AG04450 (cell line): ENCODE measurements at regions of chr3 and their contacts with region 1.

Region 1: GRCh38 chr3:138941259-138941885 is 5.6 kb downstream of the FOXL2 start:
- DNase-seq: peak; percentile 11
- H3K4me3 ChIP-seq: no peak overlapping the region
- H3K27ac ChIP-seq: no peak overlapping the region
- H3K27me3 ChIP-seq: peaks cover 93% of the 10 kb centered on the region
- CTCF ChIP-seq: peak; percentile 70

Region 2: GRCh38 chr3:138974462-138974861 is 33.1 kb after region 1 on chr3:
- CTCF ChIA-PET with region 1: interaction called, 23 read pairs
- POLR2A ChIA-PET with region 1: no interaction called
- DNase-seq: no peak
- H3K4me3 ChIP-seq: no peak overlapping the region
- H3K27ac ChIP-seq: no peak overlapping the region
- H3K27me3 ChIP-seq: peaks cover 2% of the 10 kb centered on the region
- CTCF ChIP-seq: no peak

Region 3: DNA sequence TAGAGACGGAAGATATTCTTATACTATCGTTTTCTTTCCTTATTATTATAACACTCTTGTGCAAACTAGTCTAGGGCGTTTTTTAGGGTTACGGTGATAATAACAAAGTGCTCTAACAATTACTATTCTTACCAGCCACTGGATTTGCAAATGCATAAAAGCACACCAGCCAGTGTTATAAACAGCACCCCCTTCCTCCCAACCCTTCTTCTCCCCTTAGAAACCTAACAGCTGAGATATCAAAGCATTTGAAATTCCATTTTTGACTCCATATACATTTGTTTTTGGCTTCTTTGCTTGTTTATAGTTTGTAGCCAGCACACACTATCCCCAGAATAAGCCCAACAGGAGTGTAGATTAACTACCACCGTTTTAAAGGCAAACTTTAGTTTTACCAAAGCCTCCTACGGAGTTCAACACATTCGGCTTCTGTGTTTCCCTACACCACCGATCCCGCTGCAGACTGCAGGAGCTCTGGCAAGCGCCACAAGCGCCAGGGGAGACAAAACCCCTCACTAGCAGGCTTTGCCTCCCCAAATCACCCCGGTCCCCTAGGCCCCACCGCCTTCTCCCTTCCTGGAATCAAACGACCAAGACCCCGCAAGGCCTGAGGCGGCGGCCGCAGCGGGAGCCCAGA is 447.6 kb after region 1 on chr3:
- CTCF ChIA-PET with region 1: no interaction called
- POLR2A ChIA-PET with region 1: no interaction called
- DNase-seq: no peak
- H3K4me3 ChIP-seq: peak overlapping the region; percentile 94
- H3K27ac ChIP-seq: peak overlapping the region; percentile 93
- H3K27me3 ChIP-seq: no peaks in the 10 kb centered on the region
- CTCF ChIP-seq: no peak